HepG2 (cell line): ENCODE measurements at regions of chr16 and their contacts with region 1.

Region 1: GRCh38 chr16:68074850-68075555 is 10.2 kb upstream of the NFATC3 start:
- DNase-seq: no peak
- ATAC-seq: no peak
- H3K4me3 ChIP-seq: no peak overlapping the region
- H3K27ac ChIP-seq: peak overlapping the region; percentile 8
- H3K4me1 ChIP-seq: peaks cover 40% of the 10 kb centered on the region
- H3K27me3 ChIP-seq: no peaks in the 10 kb centered on the region
- CTCF ChIP-seq: no peak
- EP300 ChIP-seq: no peak
- POLR2A ChIP-seq: no peak
- RAD21 ChIP-seq: no peak

Region 2: GRCh38 chr16:67935402-67936123 is 139.4 kb before region 1 on chr16:
- CTCF ChIA-PET with region 1: no interaction called
- POLR2A ChIA-PET with region 1: interaction called, 14 read pairs
- in situ Hi-C with region 1: no loop called
- intact Hi-C with region 1: no loop called
- DNase-seq: peak; percentile 98
- ATAC-seq: peak; percentile 85
- H3K4me3 ChIP-seq: peak overlapping the region; percentile 86 to 97 (median 97)
- H3K27ac ChIP-seq: peak overlapping the region; percentile 70
- H3K4me1 ChIP-seq: peaks cover 30% of the 10 kb centered on the region
- H3K27me3 ChIP-seq: no peaks in the 10 kb centered on the region; a peak in 1 of 5 replicates
- CTCF ChIP-seq: peak; percentile 27
- EP300 ChIP-seq: no peak
- POLR2A ChIP-seq: peak in 1 of 2 experiments; percentile 79; a peak in 2 of 4 replicates
- RAD21 ChIP-seq: peak; percentile 34; the same call in 1 of the 2 replicates

Region 3: DNA sequence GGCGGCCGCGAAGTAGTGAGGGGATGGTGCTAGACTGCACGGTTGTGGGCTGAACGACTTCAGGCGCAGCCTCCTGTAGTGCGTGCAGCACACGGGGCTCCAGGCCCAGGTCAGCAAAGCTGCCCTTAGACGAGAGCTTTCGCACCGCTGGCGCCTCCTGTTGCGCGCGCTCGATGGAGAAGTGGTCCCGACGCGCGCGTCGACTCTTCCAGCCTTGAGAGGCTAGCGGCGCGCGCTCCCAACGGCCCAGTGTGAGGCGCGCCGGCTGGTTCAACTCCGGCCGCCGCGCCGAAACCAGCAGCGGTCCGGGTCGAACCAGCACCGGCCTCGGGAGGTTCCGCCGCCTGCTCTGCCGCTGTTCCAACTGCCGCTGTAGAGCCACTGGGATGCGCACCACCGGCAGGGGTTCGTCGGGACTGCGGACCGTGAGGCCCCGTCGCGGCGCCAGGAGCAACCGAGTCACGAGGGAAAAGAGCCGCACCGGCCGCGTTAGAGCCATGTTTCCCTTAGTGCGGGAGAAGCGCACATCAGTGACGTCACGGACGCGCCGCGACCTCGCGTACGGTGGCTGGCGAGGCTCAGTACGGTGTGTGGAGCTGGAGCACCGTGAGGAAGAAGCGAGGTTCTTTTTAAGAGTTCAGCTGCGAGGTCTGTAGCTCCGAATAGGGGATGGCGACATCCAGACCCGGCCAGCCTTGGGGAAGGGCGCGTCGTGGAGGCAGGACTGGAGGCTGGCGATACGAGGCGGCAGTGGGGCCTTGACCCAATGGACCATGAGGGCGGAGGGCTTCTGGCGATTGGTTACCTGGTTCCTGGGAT is 52.1 kb before region 1 on chr16 and contains the starts of genes DDX28 and DUS2:
- CTCF ChIA-PET with region 1: no interaction called
- POLR2A ChIA-PET with region 1: interaction called, 14 read pairs
- in situ Hi-C with region 1: no loop called
- intact Hi-C with region 1: no loop called
- DNase-seq: peak; percentile 88
- ATAC-seq: peak; percentile 88
- H3K4me3 ChIP-seq: peak within 1 kb of the TSS; percentile 92 to 99 (median 92)
- H3K27ac ChIP-seq: peak within 1 kb of the TSS; percentile 83
- H3K4me1 ChIP-seq: peaks cover 24% of the 10 kb centered on the region
- H3K27me3 ChIP-seq: no peaks in the 10 kb centered on the region; a peak in 1 of 5 replicates
- CTCF ChIP-seq: peak; percentile 34; the same call in 1 of the 2 replicates
- EP300 ChIP-seq: peak; percentile 37 to 77; a peak in 2 of 4 replicates
- POLR2A ChIP-seq: peak; percentile 88 to 92
- RAD21 ChIP-seq: peak; percentile 38; the same call in 1 of the 2 replicates
- total RNA-seq, gene DDX28: 16.4 and 18.4 TPM in 2 replicates
- total RNA-seq, gene DUS2: 25.1 and 25.9 TPM in 2 replicates

Region 4: DNA sequence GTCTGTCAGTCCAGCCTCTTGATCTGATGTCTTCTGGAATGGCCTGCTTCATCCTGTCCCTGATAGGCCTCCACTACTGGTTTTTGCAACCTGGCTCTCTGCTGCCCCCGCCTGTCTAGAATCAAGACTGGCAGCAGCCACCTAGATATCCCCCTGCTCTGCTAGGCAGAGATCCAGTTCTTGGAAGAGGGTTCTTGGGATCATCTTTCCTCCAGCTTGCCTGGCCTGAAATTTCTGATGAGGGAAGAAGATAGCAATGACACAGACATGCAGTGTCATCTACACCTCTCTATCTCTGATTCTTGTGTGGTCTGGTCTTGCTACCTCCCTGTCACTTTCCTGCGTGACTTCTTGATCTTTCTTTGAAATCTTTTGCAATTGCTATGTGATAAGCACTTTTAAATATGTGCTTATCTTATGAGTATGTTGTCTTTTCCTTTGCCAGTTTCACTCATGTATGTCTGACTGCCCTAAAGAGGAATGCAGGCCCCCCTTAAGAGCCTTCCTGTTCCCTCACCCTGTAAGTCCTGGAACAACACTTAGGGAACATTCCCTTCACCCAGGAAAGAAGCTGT is 10.1 kb before region 1 on chr16:
- CTCF ChIA-PET with region 1: no interaction called
- POLR2A ChIA-PET with region 1: interaction called, 20 read pairs
- in situ Hi-C with region 1: no loop called
- intact Hi-C with region 1: no loop called
- DNase-seq: peak; percentile 61
- ATAC-seq: peak; percentile 97
- H3K4me3 ChIP-seq: no peak overlapping the region
- H3K27ac ChIP-seq: no peak overlapping the region
- H3K4me1 ChIP-seq: no peaks in the 10 kb centered on the region
- H3K27me3 ChIP-seq: no peaks in the 10 kb centered on the region
- CTCF ChIP-seq: peak; percentile 94
- EP300 ChIP-seq: no peak
- POLR2A ChIP-seq: no peak
- RAD21 ChIP-seq: peak; percentile 86

Region 5: DNA sequence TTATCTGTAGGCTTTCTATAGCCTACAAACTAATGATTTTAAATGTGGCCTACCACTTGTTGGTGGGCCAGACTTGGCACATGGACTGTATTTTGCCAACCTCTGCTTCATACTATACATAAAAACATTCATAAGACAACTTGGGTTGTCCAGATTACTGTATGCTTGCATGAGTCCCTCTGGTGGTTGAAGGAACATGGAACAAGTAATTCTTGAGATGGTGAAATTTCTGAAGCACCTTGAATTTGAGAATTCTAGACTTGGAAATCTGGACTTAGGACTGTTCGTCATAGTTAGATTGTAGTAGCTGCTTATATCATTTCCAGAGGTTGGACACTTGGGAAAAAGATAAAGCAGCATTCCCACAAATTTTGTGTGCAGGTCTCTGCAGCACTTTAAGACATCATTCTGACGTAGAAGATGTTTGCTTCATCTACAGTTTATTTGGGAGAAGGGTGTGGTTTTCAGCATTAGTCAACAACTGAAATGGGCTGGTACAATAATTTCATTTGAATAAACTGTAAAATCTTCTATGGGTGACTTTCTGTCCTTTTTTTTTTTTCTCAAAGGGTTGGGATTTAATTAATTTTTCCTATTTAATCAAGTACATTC is 41.4 kb after region 1 on chr16:
- CTCF ChIA-PET with region 1: no interaction called
- POLR2A ChIA-PET with region 1: interaction called, 38 read pairs
- in situ Hi-C with region 1: no loop called
- intact Hi-C with region 1: no loop called
- DNase-seq: no peak
- ATAC-seq: no peak
- H3K4me3 ChIP-seq: no peak overlapping the region
- H3K27ac ChIP-seq: no peak overlapping the region
- H3K4me1 ChIP-seq: peaks cover 71% of the 10 kb centered on the region
- H3K27me3 ChIP-seq: no peaks in the 10 kb centered on the region
- CTCF ChIP-seq: peak; percentile 25; the same call in 1 of the 2 replicates
- EP300 ChIP-seq: no peak
- POLR2A ChIP-seq: no peak
- RAD21 ChIP-seq: no peak

Region 6: GRCh38 chr16:68214726-68215125 is 139.7 kb after region 1 on chr16:
- CTCF ChIA-PET with region 1: no interaction called
- POLR2A ChIA-PET with region 1: no interaction called
- in situ Hi-C with region 1: no loop called
- intact Hi-C with region 1: no loop called
- DNase-seq: no peak
- ATAC-seq: no peak
- H3K4me3 ChIP-seq: no peak overlapping the region
- H3K27ac ChIP-seq: no peak overlapping the region
- H3K4me1 ChIP-seq: peaks cover under 1% of the 10 kb centered on the region; the same call in 1 of the 2 replicates
- H3K27me3 ChIP-seq: no peaks in the 10 kb centered on the region
- CTCF ChIP-seq: no peak
- EP300 ChIP-seq: no peak
- POLR2A ChIP-seq: no peak
- RAD21 ChIP-seq: no peak

Region 7: DNA sequence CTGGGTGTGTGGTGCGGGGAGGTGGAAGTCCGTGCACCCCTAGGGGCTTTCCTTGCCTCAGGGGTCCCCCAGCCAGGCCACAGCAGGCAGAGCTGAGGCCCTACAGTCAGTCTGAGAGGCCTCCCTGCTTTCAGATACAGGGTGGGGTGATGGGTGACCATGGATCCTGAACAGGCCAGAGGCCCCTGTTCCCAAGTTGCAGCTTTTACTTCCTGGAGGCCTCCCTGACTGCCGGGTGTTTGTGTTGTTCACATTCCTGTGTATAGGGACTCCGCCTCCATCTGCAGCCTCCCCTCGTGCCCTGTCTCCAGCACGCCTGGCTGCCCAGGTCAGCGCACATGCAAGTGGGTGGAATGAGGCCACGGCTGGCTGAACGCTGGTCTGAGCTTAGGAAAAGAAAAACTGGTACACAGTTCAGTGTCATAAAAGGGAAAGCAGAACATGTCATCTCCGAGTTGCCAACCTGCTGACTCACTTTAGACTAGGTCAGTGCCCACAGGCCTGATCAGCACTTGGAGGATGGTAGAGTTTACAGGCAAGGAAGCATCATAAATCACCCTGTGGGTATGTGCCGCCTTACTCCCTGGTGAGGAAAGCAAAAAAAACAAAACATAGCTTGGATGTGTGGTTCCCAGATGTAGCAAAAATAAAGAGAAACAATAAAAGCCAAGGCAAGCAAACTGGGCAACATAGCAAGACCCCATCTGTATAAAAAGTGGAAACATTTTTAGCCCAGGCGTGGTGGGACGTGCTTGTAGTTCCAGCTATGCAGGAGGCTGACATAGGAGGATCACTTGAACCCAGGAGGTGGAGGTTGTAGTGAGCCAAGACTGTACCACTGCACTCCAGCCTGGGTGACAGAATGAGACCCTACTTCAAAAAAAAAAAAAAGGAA is 183.2 kb after region 1 on chr16:
- CTCF ChIA-PET with region 1: no interaction called
- POLR2A ChIA-PET with region 1: interaction called, 13 read pairs
- in situ Hi-C with region 1: no loop called
- intact Hi-C with region 1: no loop called
- DNase-seq: peak; percentile 95
- ATAC-seq: peak; percentile 89
- H3K4me3 ChIP-seq: peak overlapping the region in 1 of 3 experiments; percentile 47; a peak in 2 of 6 replicates
- H3K27ac ChIP-seq: peak overlapping the region; percentile 87
- H3K4me1 ChIP-seq: peaks cover 45% of the 10 kb centered on the region
- H3K27me3 ChIP-seq: no peaks in the 10 kb centered on the region
- CTCF ChIP-seq: peak; percentile 34; the same call in 1 of the 2 replicates
- EP300 ChIP-seq: peak; percentile 42 to 68; a peak in 3 of 4 replicates
- POLR2A ChIP-seq: peak; percentile 19 to 24; a peak in 1 of 4 replicates
- RAD21 ChIP-seq: no peak